GM13977 (cell line): ENCODE measurements at regions of chrX and their contacts with region 1.

Region 1: DNA sequence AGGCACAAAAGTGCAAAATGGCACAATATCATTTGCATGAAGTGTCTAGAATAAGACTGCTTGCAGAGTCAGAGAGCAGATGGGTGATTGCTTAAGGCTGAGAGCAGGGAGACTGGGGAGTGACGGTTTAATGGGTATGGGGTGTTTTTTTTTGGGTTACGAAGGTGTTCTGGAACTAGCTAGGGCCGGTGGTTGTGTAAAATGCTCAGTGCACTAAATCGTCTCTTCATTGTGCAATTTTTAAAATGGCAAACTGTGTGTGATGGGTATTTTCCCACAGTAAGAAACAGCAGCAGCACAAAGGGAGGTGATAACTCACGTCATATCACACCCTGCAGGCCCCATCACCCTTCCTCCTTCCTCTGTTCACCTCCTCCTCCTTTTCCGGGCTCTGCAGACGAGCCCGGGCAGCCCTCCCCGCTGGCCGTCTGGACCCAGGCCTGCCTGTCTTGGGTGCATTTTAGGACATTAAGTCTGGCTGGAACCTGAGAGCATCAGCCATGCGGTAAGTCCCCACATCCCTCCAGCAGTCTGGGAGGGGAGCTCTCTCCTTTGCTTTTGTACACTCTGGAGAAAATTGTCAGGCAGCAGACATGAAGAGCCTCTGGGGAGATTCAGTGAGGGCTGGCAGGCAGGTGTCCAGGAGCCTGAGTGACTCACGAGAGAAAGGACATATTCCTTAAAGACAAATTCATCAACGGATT is 42.7 kb downstream of the ASMT start:
- DNase-seq: peak; percentile 58
- CTCF ChIP-seq: no peak

Region 2: GRCh38 chrX:1546691-1547251 is 110.7 kb before region 1 on chrX:
- in situ Hi-C with region 1: no loop called
- DNase-seq: no peak
- CTCF ChIP-seq: no peak

Region 3: DNA sequence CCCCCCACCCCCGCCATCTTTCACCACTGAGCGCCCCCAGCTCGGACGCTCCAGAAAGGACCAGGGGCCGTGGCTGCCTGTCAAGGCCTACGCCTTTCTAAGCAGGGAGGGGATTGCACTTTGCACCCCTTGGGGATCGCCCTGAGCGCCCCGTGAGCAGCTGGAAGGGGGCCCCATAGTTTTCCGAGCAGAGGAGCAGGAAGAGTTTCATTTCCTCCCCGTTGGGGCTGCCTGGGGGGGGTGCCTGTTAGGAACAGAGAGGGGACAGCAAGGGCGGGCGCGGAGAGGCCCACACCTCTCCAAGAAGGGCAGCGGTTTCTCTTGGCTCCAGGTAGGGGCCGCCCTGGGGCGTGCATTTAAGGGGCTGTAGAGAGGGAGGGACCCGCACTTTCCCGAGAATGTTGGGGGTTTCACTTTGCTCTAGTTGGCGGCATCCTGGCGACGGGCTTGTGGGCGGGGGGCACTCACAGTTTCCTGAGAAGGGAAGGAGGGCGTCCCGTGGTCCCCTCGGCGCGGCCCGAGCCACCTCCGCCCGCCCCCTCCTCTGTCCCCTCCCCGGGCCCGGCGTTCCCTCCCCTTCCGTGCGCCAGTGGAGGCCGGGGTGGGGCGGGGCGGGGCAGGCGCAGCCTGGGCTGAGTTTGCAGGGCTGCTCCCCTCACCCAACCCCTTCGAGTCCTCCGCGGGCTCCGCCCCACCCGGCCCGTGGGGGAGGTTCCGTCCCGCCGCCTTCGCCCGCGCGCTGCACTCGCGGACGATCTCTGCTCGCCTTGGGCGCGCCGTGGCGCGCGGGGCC is 951.3 kb after region 1 on chrX:
- in situ Hi-C with region 1: loop called (anchors 10 kb)
- DNase-seq: peak; percentile 95
- CTCF ChIP-seq: peak; percentile 21

Region 4: GRCh38 chrX:2627272-2627867 is 969.9 kb after region 1 on chrX:
- in situ Hi-C with region 1: loop called (anchors 10 kb)
- DNase-seq: peak; percentile 41
- CTCF ChIP-seq: peak; percentile 70

Region 5: DNA sequence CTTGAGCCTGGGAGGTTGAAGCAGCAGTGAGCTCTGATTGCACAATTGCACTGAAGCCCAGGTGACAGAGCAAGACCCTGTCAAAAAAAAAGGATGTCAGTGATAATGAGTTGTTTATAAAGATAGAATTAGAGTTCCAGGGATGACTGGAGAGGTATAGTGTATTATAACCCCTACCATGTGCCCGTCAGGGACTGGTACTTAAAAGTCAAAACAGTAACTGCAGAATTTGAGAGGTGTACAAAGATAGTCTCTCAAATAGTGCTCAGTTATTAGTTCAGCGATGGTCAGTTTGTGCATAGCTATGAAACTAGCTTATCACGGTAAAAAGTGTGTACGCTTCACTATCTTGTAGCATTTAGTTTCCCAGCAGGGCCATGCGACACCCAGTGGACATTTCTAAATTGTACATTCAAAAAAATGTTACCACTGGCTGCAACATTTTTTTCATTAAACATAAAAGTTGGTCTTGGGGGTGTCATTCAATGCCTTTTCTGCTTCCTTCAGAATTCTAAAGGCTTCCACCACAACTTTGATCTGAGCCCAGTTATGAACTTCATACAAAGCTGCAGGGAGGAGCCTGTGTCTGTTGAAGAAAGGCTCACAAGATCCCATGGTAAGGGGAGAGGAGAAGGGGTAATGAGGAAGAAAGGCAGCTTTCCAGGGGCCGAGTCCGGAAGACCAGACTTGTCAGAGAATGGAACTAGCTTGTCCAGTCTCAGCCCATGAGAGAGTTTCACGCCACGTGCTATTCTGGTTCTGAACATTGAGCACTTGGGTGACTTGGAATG is 1162.0 kb after region 1 on chrX:
- in situ Hi-C with region 1: loop called (anchors 25 kb)
- DNase-seq: peak; percentile 63
- CTCF ChIP-seq: peak; percentile 55